ENCODE measurements at regions of chr12 and their contacts with region 1.

Region 1: DNA sequence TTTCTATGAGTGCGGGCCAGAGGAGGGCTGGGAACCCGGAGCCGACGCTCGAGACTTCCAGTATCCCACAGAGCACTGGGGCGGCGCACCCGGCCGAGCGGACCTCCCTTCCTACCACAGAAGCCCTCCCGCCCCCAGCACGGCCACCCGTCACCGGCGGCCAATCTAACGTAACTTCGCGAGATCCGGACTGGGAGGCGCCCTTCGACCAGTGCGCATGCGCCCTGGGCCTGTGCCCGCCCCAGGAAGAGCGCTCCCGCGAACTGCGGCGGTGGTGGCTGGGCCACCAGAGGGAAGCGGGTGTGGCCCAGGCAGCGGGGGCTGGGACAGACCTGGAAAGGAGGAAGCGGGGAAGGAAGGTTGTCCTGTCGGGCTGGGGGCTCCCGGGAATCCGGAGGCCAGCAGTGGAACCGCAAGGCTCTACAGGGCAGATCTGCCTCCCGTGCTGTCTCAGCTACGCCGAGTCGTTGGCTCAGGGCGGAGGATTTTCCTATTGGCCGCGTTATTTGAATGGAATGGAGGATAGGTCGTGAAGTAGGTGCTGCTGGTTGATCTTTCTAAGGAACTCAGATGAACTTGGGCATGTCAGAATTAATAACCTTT is at the start of gene PPP1R12A:
- DNase-seq: peak; percentile 98
- ATAC-seq: peak; percentile 97 to 100 (median 98)
- H3K4me3 ChIP-seq: peak within 1 kb of the TSS; percentile 74 to 97 (median 87)
- H3K27ac ChIP-seq: peak within 1 kb of the TSS; percentile 90 to 98 (median 96)
- H3K4me1 ChIP-seq: peaks cover 0 to 51% (median 44%) of the 10 kb centered on the region in 9 donors
- H3K27me3 ChIP-seq: no peaks in the 10 kb centered on the region
- CTCF ChIP-seq: peak in 6 of 9 donors; percentile 16 to 40 (median 28)
- total RNA-seq, gene PPP1R12A: 46.3 to 73.5 (median 60.5) TPM

Region 2: DNA sequence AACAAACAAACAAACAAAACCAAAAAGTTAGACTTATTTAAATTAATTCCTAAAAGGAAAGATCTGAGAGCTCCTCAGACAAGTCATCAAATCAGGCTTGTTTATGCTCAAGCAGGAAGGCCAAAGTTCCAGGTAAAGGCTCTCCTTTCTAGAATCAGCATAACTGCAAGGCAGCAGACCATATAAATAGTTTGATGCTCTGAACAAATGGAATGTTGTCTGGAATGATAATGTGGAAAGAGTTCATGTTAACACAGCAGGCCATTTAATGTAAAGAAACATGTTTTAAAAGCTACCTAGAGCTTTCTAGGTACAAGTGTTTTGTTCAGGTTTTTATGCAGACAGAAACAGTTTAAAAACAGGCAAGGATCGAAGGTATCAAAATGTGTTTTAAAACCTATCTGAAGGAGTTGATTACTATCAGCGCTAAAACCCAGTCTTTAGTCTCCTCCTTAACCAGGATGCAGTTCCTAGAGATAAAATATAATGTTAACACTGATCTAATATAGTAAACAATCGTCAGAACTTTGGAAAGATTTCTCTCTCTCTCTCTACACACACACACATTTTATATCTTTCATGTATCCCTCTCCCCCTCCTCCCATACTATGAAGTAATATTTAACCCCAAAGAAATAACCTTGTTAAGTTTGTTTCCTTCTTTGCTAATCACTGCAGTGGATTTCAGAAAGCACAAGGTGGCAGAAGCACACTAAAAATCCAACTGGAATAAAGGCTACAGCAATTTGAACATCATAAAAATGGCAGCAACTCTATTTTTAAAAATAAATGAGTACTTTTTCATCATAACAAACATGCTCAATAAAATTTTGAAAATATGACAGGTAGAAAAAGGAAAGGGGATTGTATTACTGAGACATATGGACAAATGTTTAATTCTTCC is 379.8 kb before region 1 on chr12:
- intact Hi-C with region 1: loop called in 1 of 10 experiments (anchors 10 kb)
- DNase-seq: peak in 1 of 2 donors; percentile 15
- ATAC-seq: peak in 2 of 8 donors; percentile 40 to 47
- H3K4me3 ChIP-seq: no peak overlapping the region
- H3K27ac ChIP-seq: no peak overlapping the region
- H3K4me1 ChIP-seq: peaks cover 0 to 47% (median 12%) of the 10 kb centered on the region in 9 donors
- H3K27me3 ChIP-seq: no peaks in the 10 kb centered on the region
- CTCF ChIP-seq: peak; percentile 25 to 79 (median 58)

Region 3: GRCh38 chr12:79776111-79776510 is 159.0 kb before region 1 on chr12:
- intact Hi-C with region 1: loop called in 3 of 10 experiments (anchors 10 kb)
- DNase-seq: no peak
- ATAC-seq: peak in 1 of 8 donors; percentile 38
- H3K4me3 ChIP-seq: no peak overlapping the region
- H3K27ac ChIP-seq: peak overlapping the region in 6 of 10 donors; percentile 5 to 51 (median 26)
- H3K4me1 ChIP-seq: peaks cover 0 to 24% (median 13%) of the 10 kb centered on the region in 9 donors
- H3K27me3 ChIP-seq: no peaks in the 10 kb centered on the region
- CTCF ChIP-seq: no peak

Region 4: DNA sequence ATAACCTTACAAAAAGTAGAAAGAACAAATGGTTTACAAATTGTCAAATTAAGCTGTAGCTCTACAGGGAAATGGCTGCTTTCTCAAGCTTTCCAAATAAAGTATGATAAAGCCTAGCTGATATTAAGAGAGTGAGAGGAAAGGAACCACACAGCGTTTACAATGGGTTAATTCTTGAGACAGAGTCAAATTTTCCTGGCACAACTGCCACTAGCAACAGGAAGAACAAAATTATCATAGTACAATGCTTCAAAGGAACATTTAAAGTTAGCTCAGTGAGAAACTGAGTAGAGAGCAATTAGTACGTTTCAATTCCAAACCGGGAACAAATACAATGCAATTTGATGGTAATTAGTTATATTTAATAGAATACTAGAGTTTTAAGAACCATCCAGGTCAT is 116.3 kb before region 1 on chr12:
- intact Hi-C with region 1: loop called in 7 of 10 experiments (anchors 5 to 10 kb)
- DNase-seq: peak in 1 of 2 donors; percentile 57
- ATAC-seq: peak; percentile 76 to 91 (median 88)
- H3K4me3 ChIP-seq: peak overlapping the region in 2 of 10 donors; percentile 11 to 27
- H3K27ac ChIP-seq: peak overlapping the region; percentile 16 to 86 (median 76)
- H3K4me1 ChIP-seq: peaks cover 0 to 48% (median 32%) of the 10 kb centered on the region in 9 donors
- H3K27me3 ChIP-seq: no peaks in the 10 kb centered on the region
- CTCF ChIP-seq: no peak

Region 5: GRCh38 chr12:79886917-79887519 is 48.1 kb before region 1 on chr12:
- intact Hi-C with region 1: loop called in 4 of 10 experiments (anchors 2 to 10 kb)
- DNase-seq: no peak
- ATAC-seq: peak in 4 of 8 donors; percentile 54 to 77 (median 59)
- H3K4me3 ChIP-seq: no peak overlapping the region
- H3K27ac ChIP-seq: no peak overlapping the region
- H3K4me1 ChIP-seq: peaks cover 0 to 93% (median 74%) of the 10 kb centered on the region in 9 donors
- H3K27me3 ChIP-seq: no peaks in the 10 kb centered on the region
- CTCF ChIP-seq: peak in 8 of 9 donors; percentile 22 to 68 (median 60)

Region 6: GRCh38 chr12:80041692-80042091 is 106.6 kb after region 1 on chr12:
- intact Hi-C with region 1: no loop called
- DNase-seq: no peak
- ATAC-seq: no peak
- H3K4me3 ChIP-seq: no peak overlapping the region
- H3K27ac ChIP-seq: no peak overlapping the region
- H3K4me1 ChIP-seq: peaks cover 0 to 3% (median 0%) of the 10 kb centered on the region in 9 donors
- H3K27me3 ChIP-seq: no peaks in the 10 kb centered on the region
- CTCF ChIP-seq: no peak

Region 7: DNA sequence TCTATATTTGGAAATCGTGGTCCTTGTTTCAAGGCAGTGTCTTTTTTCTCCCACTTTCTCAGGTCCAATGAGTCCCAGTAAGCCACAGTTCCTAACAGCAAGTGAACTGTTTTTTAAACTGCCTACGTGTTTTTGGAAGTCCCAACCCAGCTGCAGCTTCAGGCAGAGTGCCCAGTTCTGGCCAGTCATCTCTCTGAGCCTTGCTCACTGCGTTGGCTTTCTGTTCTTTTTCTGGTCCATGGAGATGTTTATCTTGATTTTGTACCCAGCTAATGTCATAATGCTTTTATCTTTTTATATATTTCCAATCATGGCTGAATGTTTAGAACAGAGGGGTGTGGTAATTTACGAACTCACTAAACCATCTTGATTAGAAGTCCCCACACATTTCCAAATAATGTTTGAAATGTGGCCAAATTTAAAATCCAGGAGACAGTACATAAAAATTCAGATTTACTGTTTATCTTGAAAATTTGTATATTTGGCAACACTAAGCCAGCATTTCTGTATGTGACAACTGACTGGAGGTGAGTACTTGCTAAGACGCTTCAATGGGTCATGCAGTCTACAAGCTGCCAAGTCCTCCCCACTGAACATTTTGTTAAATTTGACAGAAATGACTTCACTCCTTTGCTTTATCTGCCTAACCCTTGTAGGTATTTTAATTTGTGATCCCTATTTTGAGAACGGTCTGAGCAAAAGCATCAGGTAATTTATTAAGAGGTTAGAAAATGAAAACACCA is 118.1 kb after region 1 on chr12:
- intact Hi-C with region 1: loop called in 1 of 10 experiments (anchors 10 kb)
- DNase-seq: peak; percentile 58 to 65
- ATAC-seq: peak in 6 of 8 donors; percentile 72 to 83 (median 78)
- H3K4me3 ChIP-seq: no peak overlapping the region
- H3K27ac ChIP-seq: peak overlapping the region in 4 of 10 donors; percentile 16 to 49 (median 24)
- H3K4me1 ChIP-seq: peaks cover 0 to 29% (median 12%) of the 10 kb centered on the region in 9 donors
- H3K27me3 ChIP-seq: no peaks in the 10 kb centered on the region
- CTCF ChIP-seq: no peak

Measured in heart right ventricle (tissue), 16 donors.